ENCODE measurements at regions of chr5 and their contacts with region 1.

Region 1: GRCh38 chr5:124377386-124377785 is 369.1 kb downstream of the ZNF608 start:
- DNase-seq: no peak
- ATAC-seq: no peak
- H3K4me3 ChIP-seq: no peak overlapping the region
- H3K4me3 Mint-ChIP-seq: no peak overlapping the region
- H3K27ac ChIP-seq: no peak overlapping the region
- H3K27ac Mint-ChIP-seq: no peak overlapping the region
- H3K4me1 ChIP-seq: no peaks in the 10 kb centered on the region
- H3K4me1 Mint-ChIP-seq: no peaks in the 10 kb centered on the region
- H3K27me3 ChIP-seq: no peaks in the 10 kb centered on the region
- H3K27me3 Mint-ChIP-seq: no peaks in the 10 kb centered on the region

Region 2: GRCh38 chr5:124259017-124259416 is 118.4 kb before region 1 on chr5:
- CTCF ChIA-PET with region 1: no interaction called
- POLR2A ChIA-PET with region 1: no interaction called
- intact Hi-C with region 1: loop called in 1 of 2 experiments (anchors 5 kb)
- DNase-seq: no peak
- ATAC-seq: no peak
- H3K4me3 ChIP-seq: no peak overlapping the region
- H3K4me3 Mint-ChIP-seq: no peak overlapping the region
- H3K27ac ChIP-seq: no peak overlapping the region
- H3K27ac Mint-ChIP-seq: no peak overlapping the region
- H3K4me1 ChIP-seq: no peaks in the 10 kb centered on the region
- H3K4me1 Mint-ChIP-seq: no peaks in the 10 kb centered on the region
- H3K27me3 ChIP-seq: no peaks in the 10 kb centered on the region
- H3K27me3 Mint-ChIP-seq: no peaks in the 10 kb centered on the region

Measured in naive thymus-derived CD4-positive, alpha-beta T cell (primary cell).